PC-3 (cell line): ENCODE measurements at regions of chr6 and their contacts with region 1.

Region 1: DNA sequence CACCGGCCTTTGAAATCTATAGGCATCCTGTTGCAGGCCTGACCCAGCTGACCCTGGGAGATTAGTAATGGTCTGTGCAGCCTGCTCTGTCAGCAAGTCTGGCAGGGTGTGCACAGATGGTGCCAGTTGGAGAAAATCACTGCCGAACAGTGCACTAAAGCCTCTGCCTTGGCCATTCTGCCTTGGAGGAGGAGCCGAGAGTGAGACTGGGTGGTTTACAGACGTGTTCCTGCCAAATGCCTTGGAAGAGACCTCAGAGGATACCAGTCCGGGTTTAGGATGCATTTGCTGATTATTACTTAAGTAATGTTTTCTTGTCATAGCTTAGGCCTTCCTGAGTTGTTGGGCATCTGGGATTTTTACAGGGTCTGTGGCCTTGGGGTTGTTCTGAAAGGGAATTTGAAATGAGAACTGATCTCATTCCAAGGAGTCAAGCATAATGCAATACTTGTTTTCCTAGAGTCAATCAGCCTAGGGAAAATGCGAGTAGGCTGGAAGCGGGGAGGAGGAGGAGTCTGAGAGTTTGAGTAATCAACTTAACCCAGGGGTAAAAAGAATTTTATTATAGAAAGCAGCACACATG is 292.1 kb downstream of the SOX4 start:
- DNase-seq: peak; percentile 20
- ATAC-seq: peak; percentile 21; the same call in 1 of the 2 replicates
- H3K4me3 ChIP-seq: no peak overlapping the region
- H3K27ac ChIP-seq: no peak overlapping the region
- H3K4me1 ChIP-seq: peaks cover 29% of the 10 kb centered on the region
- H3K27me3 ChIP-seq: no peaks in the 10 kb centered on the region
- CTCF ChIP-seq: no peak

Region 2: DNA sequence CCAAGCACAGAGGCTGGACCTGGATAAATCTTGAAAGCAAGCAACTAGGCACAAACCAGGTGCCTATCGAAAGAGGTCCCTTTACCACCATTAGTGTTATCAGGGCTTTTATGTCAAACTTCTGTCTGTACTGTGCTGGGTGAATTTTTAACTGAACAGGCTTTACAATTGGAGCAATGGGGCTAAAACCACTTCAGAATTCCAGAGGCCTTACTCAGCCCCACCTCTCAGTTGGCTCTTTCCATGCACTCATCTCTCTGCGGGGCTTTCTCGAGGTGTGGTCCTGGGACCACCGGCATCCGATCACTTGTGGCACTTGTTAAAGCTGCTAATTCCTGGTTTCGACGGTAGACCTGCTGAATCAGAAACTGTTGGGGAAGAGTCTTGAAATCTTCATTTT is 59.6 kb before region 1 on chr6:
- CTCF ChIA-PET with region 1: no interaction called
- POLR2A ChIA-PET with region 1: no interaction called
- intact Hi-C with region 1: loop called (anchors 10 kb)
- DNase-seq: peak; percentile 62
- ATAC-seq: peak; percentile 40
- H3K4me3 ChIP-seq: no peak overlapping the region
- H3K27ac ChIP-seq: no peak overlapping the region
- H3K4me1 ChIP-seq: peaks cover 33% of the 10 kb centered on the region
- H3K27me3 ChIP-seq: no peaks in the 10 kb centered on the region
- CTCF ChIP-seq: no peak

Region 3: DNA sequence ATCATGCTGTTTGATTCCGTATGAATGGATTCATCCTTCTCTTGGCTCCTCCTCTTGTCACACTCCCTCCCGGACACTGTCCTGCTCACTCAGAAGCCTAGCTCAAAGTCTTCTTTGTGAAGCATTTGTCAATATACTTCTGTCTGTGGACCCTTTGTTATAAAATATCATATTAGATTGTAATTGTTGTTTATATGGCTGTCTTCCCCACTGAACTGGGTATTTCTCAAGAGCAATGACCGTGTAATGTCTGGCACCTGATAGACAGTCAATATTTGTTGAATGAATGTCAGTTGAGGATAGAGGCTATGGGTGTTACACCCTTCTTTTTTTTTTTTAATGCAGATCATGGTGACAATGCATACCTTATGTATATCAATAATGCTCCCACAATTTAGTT is 43.2 kb after region 1 on chr6:
- CTCF ChIA-PET with region 1: no interaction called
- POLR2A ChIA-PET with region 1: no interaction called
- intact Hi-C with region 1: loop called (anchors 5 kb)
- DNase-seq: no peak
- ATAC-seq: no peak
- H3K4me3 ChIP-seq: no peak overlapping the region
- H3K27ac ChIP-seq: no peak overlapping the region
- H3K4me1 ChIP-seq: no peaks in the 10 kb centered on the region
- H3K27me3 ChIP-seq: no peaks in the 10 kb centered on the region
- CTCF ChIP-seq: no peak

Region 4: GRCh38 chr6:22113026-22113766 is 227.6 kb after region 1 on chr6:
- CTCF ChIA-PET with region 1: no interaction called
- POLR2A ChIA-PET with region 1: no interaction called
- intact Hi-C with region 1: no loop called
- DNase-seq: peak; percentile 98
- ATAC-seq: peak; percentile 98
- H3K4me3 ChIP-seq: no peak overlapping the region
- H3K27ac ChIP-seq: peak overlapping the region; percentile 99
- H3K4me1 ChIP-seq: peaks cover 20% of the 10 kb centered on the region
- H3K27me3 ChIP-seq: no peaks in the 10 kb centered on the region
- CTCF ChIP-seq: no peak